ENCODE measurements at regions of chr16 and their contacts with region 1.

Region 1: GRCh38 chr16:13021996-13022395 is 120.6 kb downstream of the SHISA9 start:
- DNase-seq: no peak
- H3K4me3 ChIP-seq: no peak overlapping the region
- H3K27ac ChIP-seq: no peak overlapping the region
- H3K4me1 ChIP-seq: no peaks in the 10 kb centered on the region
- H3K27me3 ChIP-seq: no peaks in the 10 kb centered on the region
- CTCF ChIP-seq: no peak
- EP300 ChIP-seq: no peak
- POLR2A ChIP-seq: no peak

Region 2: DNA sequence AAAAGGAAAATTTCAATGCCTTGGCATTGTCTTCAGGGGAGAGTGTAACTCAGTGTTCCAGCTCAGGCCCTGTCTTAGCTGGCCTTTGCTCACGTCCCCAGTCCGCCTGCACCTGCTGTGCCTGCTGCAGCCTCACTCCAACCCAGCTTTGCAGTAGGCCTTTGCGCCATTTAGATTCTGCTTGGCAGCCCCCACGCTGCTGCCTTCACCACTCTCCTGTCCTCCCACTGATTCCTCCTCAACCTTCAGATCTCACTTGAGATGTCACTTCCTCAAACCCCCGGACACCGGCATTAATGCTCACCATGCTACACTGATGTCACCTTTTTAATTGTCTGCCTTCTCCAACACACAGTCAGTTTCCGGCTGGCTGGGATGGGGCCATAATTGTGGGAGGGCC is 45.7 kb after region 1 on chr16:
- in situ Hi-C with region 1: no loop called
- intact Hi-C with region 1: loop called (anchors 1 kb)
- DNase-seq: no peak
- H3K4me3 ChIP-seq: no peak overlapping the region
- H3K27ac ChIP-seq: no peak overlapping the region
- H3K4me1 ChIP-seq: no peaks in the 10 kb centered on the region
- H3K27me3 ChIP-seq: no peaks in the 10 kb centered on the region
- CTCF ChIP-seq: no peak
- EP300 ChIP-seq: no peak
- POLR2A ChIP-seq: no peak

Measured in transverse colon (tissue), 4 donors.